ENCODE measurements at regions of chr3 and their contacts with region 1.

Region 1: DNA sequence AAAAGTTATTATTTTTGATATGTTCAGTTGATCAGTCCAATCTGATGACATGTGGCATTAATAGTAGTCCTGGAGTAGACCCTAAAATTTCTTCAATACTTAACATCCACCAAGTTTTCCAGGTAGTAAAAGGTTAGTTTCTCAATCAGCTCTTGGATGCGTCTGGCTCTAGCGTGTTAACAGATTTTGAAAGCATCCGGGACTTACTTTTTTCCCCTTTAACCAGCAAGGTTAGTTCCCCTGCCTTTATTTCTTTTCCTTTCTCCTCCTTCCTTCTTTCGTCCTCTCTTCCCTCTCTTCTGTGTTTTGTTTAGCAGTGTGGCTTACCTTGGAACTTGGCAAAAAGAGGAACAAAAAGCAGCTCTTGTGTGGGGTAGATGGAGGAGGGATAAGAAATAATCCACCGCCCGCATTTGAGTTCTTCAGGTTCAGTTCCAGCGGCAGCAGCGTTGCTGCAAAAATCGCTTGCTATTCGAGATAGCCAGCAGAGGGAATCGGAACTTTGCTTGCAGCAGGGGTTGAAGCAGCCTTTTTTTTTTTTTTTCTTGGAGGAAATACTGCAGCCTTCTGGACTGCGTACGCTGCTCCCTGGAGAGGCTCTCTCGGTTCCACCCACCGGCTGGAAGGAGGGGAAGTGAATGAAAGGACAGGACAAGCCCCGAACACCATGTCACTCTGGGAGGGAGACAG is at the start of gene RBMS3:
- DNase-seq: peak; percentile 90 to 93 (median 92)
- ATAC-seq: peak; percentile 91 to 95 (median 94)
- H3K4me3 ChIP-seq: peak within 1 kb of the TSS; percentile 43 to 84 (median 66)
- H3K27ac ChIP-seq: peak within 1 kb of the TSS; percentile 83 to 96 (median 91)
- H3K4me1 ChIP-seq: peaks cover 0 to 29% (median 13%) of the 10 kb centered on the region in 12 donors
- H3K27me3 ChIP-seq: no peaks in the 10 kb centered on the region
- CTCF ChIP-seq: peak; percentile 22 to 80 (median 54)
- POLR2A ChIP-seq: peak in 1 of 2 donors; percentile 58
- total RNA-seq, gene RBMS3: 19.0 to 35.6 (median 27.3) TPM

Region 2: GRCh38 chr3:28916713-28917499 is 363.6 kb before region 1 on chr3:
- intact Hi-C with region 1: loop called in 8 of 10 experiments (anchors 5 to 10 kb)
- DNase-seq: peak in 4 of 5 donors; percentile 65 to 82 (median 70)
- ATAC-seq: peak; percentile 85 to 98 (median 96)
- H3K4me3 ChIP-seq: peak overlapping the region in 9 of 12 donors; percentile 23 to 49 (median 39)
- H3K27ac ChIP-seq: peak overlapping the region; percentile 32 to 73 (median 53)
- H3K4me1 ChIP-seq: peaks cover 0 to 26% (median 10%) of the 10 kb centered on the region in 12 donors
- H3K27me3 ChIP-seq: no peaks in the 10 kb centered on the region
- CTCF ChIP-seq: peak; percentile 47 to 77 (median 67)
- POLR2A ChIP-seq: no peak

Region 3: DNA sequence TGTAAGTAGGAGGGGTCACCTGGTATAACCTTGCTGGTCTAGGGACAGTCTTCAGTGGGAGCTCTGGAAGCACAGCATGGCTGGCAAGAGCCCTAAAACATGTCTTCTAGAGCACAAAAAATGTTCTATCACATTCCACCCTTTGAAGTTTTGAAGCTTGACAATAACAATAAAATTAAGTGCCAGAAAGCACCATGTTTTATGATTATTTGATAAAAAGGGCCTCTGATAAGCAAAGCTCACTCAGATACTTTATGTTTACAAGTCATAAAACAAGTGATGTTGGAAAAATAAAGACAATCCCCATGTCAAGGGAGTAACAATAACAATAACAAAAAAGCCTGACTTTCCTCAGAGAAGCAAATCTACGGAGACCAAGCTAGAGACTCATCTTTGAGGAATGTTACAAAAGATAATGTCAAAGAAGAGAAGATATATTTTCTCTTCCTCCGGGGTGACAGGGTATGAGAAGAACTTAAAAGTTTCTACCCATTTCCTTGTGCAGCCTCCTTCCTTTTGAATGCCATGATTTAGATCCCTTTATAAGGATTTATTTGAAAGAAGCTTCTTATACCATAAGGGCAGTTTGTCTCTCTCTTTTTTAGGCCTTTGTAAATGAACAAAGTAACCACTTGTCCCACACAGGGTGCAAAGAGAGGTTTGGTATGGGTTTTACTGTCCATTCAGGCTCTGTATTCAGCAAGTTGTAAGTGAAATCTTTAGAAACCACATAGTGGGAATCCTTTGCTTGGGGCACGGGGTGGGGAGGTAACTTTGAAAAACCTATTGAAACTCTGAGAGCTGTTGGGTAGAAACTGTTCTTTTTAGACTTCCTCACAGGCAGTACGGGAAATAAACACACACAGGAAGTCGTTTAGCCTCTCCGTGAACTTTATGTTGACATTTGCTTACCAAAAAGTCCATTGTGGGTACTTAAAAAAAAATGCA is 109.2 kb before region 1 on chr3:
- intact Hi-C with region 1: loop called in 2 of 10 experiments (anchors 5 to 10 kb)
- DNase-seq: no peak
- ATAC-seq: peak; percentile 27 to 73 (median 65)
- H3K4me3 ChIP-seq: no peak overlapping the region
- H3K27ac ChIP-seq: peak overlapping the region; percentile 30 to 75 (median 60)
- H3K4me1 ChIP-seq: peaks cover 0 to 36% (median 10%) of the 10 kb centered on the region in 12 donors
- H3K27me3 ChIP-seq: no peaks in the 10 kb centered on the region
- CTCF ChIP-seq: no peak
- POLR2A ChIP-seq: no peak

Region 4: GRCh38 chr3:29384640-29385039 is 104.1 kb after region 1 on chr3:
- intact Hi-C with region 1: loop called in 1 of 10 experiments (anchors 10 kb)
- DNase-seq: peak in 3 of 5 donors; percentile 20 to 36 (median 34)
- ATAC-seq: peak in 3 of 4 donors; percentile 67 to 76 (median 67)
- H3K4me3 ChIP-seq: no peak overlapping the region
- H3K27ac ChIP-seq: peak overlapping the region in 8 of 12 donors; percentile 20 to 61 (median 40)
- H3K4me1 ChIP-seq: peaks cover 0 to 54% (median 11%) of the 10 kb centered on the region in 12 donors
- H3K27me3 ChIP-seq: no peaks in the 10 kb centered on the region
- CTCF ChIP-seq: no peak
- POLR2A ChIP-seq: no peak

Region 5: DNA sequence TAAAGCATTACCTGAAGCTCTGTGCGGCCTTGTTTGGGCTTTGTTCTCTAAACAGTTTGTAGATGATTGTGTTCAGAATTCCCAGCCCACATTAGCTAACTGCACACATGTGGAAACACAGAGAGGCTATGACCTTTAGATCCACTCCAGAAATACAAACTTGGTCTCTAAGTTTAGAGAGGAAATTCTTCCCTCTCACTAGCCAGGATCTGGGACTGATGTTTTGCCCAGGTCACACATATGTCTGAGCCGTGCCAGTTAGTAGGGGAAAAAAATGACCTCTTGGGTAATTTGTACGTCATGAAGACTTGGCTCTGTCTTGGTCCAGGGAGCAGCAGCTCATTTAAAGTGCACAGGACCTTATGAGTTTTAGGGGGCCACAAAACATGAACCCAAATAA is 223.4 kb after region 1 on chr3:
- intact Hi-C with region 1: no loop called
- DNase-seq: peak in 4 of 5 donors; percentile 31 to 45 (median 38)
- ATAC-seq: peak; percentile 80 to 99 (median 96)
- H3K4me3 ChIP-seq: no peak overlapping the region
- H3K27ac ChIP-seq: peak overlapping the region in 11 of 12 donors; percentile 16 to 73 (median 52)
- H3K4me1 ChIP-seq: peaks cover 0 to 30% (median 11%) of the 10 kb centered on the region in 12 donors
- H3K27me3 ChIP-seq: no peaks in the 10 kb centered on the region
- CTCF ChIP-seq: no peak
- POLR2A ChIP-seq: no peak

Region 6: DNA sequence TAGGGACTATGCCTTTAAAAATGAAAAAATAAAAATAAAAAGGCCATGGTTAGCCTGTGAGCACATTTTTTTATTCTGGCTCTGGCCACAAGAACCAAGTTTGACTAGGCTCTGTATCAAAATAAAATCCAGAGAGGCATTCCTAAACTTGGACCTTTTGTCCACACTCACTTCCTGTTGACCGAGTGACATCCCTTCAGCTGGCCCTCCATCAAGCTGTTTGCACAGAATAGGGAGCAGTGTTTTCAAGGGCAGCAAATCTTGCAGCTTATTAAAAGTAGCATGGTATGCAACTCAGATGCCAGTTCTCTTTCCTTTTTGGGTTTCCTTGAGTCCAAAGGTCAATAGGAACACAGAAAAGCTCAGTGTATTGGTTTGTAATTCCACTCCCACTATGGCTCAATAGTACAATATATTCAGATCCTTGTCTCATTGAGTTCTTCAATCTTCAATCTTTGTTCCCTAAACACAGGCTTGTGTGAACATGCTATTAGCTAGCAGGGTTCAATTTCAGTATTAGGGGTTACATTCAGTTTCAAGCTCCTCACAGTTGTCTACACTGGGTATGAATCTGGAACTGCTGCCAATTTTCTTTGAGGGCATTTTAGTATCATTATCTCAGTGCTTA is 244.8 kb after region 1 on chr3:
- intact Hi-C with region 1: loop called in 7 of 10 experiments (anchors 2 to 10 kb)
- DNase-seq: peak in 4 of 5 donors; percentile 51 to 73 (median 63)
- ATAC-seq: peak; percentile 90 to 95 (median 92)
- H3K4me3 ChIP-seq: peak overlapping the region in 1 of 12 donors; percentile 8
- H3K27ac ChIP-seq: peak overlapping the region; percentile 7 to 83 (median 62)
- H3K4me1 ChIP-seq: peaks cover 9 to 76% (median 36%) of the 10 kb centered on the region in 12 donors
- H3K27me3 ChIP-seq: no peaks in the 10 kb centered on the region
- CTCF ChIP-seq: no peak
- POLR2A ChIP-seq: no peak

Region 7: DNA sequence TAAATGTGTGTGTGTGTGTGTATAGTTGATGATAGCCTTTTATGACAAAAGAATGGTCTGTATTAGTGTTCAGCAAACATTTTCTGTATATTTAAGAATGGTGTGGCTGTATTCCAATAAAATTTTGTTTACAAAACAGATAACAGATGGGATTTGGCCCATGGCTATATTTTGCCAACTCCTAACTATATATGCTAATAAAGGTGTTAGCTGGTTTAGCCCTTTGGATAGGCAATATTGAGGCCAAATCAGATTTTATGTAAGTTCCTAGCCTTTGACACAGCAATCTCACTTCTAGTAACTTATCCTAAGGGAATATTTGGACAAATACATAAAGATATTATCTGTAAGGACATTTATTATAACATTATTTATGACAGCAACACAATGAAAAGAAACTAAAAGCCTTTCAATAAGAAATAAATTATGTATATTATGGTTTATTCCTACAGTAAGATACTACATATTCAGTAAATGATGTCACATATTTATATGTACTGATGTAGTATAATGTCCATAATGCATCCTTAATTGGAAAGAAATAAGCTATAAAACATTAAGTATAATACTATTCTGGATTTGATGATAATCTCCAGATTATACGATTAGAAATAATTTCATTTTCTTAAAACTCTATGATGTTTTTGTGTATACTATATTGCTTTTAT is 264.3 kb after region 1 on chr3:
- intact Hi-C with region 1: no loop called
- DNase-seq: no peak
- ATAC-seq: no peak
- H3K4me3 ChIP-seq: no peak overlapping the region
- H3K27ac ChIP-seq: no peak overlapping the region
- H3K4me1 ChIP-seq: peaks cover 0 to 23% (median 3%) of the 10 kb centered on the region in 12 donors
- H3K27me3 ChIP-seq: no peaks in the 10 kb centered on the region
- CTCF ChIP-seq: no peak
- POLR2A ChIP-seq: no peak

Region 8: DNA sequence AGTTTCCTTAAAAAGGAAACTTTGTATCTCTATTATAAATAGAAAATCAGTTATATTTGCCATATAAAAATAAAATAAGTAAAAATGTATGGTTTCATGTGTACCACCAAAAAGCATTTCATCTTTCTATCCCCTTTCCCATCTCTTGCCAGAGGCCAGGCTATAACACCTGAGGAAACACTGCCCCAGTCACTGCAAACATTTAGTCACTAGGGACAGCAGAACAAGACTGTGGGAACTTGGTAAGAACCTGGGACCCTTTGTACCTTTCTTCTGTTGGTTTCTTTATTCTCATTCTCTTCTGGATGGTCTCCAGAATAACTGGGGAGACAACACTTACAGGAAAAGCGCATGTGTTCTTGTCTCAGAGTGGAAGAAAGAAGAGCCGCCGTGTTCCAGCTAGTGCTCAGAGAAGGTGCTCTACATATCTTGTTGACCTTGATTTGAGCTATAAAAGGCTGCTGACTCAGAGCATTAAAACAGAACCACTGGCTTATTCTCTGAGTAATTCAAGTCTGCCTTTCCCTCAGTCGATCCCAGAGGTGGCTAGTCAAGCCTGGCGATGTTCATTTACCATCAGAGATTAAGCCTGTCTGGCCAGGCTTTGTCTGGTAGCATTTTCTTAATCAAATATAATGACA is 362.0 kb after region 1 on chr3:
- intact Hi-C with region 1: loop called in 2 of 10 experiments (anchors 5 to 10 kb)
- DNase-seq: peak in 4 of 5 donors; percentile 25 to 63 (median 32)
- ATAC-seq: peak; percentile 86 to 97 (median 94)
- H3K4me3 ChIP-seq: peak overlapping the region in 5 of 12 donors; percentile 5 to 26 (median 20)
- H3K27ac ChIP-seq: peak overlapping the region; percentile 37 to 92 (median 76)
- H3K4me1 ChIP-seq: peaks cover 0 to 69% (median 28%) of the 10 kb centered on the region in 12 donors
- H3K27me3 ChIP-seq: no peaks in the 10 kb centered on the region
- CTCF ChIP-seq: no peak
- POLR2A ChIP-seq: no peak

Region 9: GRCh38 chr3:29759411-29760225 is 479.1 kb after region 1 on chr3:
- intact Hi-C with region 1: loop called (anchors 2 to 5 kb)
- DNase-seq: peak in 2 of 5 donors; percentile 11 to 26
- ATAC-seq: peak; percentile 49 to 73 (median 58)
- H3K4me3 ChIP-seq: peak overlapping the region in 5 of 12 donors; percentile 1 to 14 (median 4)
- H3K27ac ChIP-seq: peak overlapping the region; percentile 25 to 84 (median 68)
- H3K4me1 ChIP-seq: peaks cover 0 to 77% (median 50%) of the 10 kb centered on the region in 12 donors
- H3K27me3 ChIP-seq: no peaks in the 10 kb centered on the region
- CTCF ChIP-seq: no peak
- POLR2A ChIP-seq: no peak